Activated T-helper 2 cell treated with anti-CD3 and anti-CD28 coated beads, Interferon-gamma antibody, Interleukin-2, Interleukin-4, amounts not matched to agents 10 μg/mL and 5 μg/mL and 100 μg/mL, durations not matched to agents 14 hours and 24 hours and 36 hours (primary cell): ENCODE measurements at regions of chr5 and their contacts with region 1.

Region 1: GRCh38 chr5:157858527-157859226 is at the start of gene CLINT1:
- DNase-seq: peak; percentile 83
- H3K4me3 Mint-ChIP-seq: peak within 1 kb of the TSS; percentile 86
- H3K27ac Mint-ChIP-seq: peak within 1 kb of the TSS; percentile 98
- H3K4me1 Mint-ChIP-seq: peaks cover 61% of the 10 kb centered on the region
- H3K27me3 Mint-ChIP-seq: no peaks in the 10 kb centered on the region
- total RNA-seq, gene CLINT1: 95.2 and 100 TPM in 2 replicates

Region 2: GRCh38 chr5:157596487-157596886 is 262.2 kb before region 1 on chr5:
- intact Hi-C with region 1: loop called (anchors 5 kb)
- DNase-seq: peak; percentile 49
- H3K4me3 Mint-ChIP-seq: no peak overlapping the region
- H3K27ac Mint-ChIP-seq: peak overlapping the region; percentile 21
- H3K4me1 Mint-ChIP-seq: peaks cover 90% of the 10 kb centered on the region
- H3K27me3 Mint-ChIP-seq: no peaks in the 10 kb centered on the region

Region 3: DNA sequence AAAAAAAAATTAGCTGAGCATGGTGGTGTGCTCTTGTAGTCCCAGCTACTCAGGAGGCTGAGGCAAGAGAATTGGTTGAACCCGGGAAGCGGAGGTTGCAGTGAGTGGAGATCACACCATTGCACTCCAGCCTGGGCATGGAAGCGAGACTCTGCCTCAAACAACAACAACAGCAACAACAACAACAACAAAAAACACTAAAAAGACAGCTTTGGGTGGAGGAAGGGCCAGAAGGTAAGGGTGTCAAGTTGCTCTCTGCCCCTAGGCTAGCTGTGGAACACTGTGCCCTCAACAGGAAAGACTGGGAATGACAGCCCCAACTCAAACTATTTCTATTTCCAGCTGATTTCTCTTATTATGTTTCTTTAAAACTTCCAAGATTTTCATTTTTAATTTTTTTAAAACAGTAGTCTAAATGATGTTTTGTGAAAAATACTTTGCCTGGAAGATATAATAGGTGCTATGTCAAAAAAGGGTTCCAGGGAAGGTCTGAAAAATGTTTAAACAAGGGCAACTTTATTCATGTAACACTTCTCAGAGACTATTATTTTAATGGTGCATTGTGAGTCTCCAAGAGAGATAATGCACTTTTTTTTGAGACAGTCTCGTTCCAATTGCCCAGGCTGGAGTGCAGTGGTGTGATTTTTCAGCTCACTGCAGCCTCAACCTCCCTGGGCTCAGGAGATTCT is 29.6 kb before region 1 on chr5:
- intact Hi-C with region 1: loop called (anchors 2 kb)
- DNase-seq: no peak
- H3K4me3 Mint-ChIP-seq: no peak overlapping the region
- H3K27ac Mint-ChIP-seq: no peak overlapping the region
- H3K4me1 Mint-ChIP-seq: peaks cover 24% of the 10 kb centered on the region
- H3K27me3 Mint-ChIP-seq: no peaks in the 10 kb centered on the region

Region 4: GRCh38 chr5:157892974-157893373 is 34.3 kb after region 1 on chr5:
- intact Hi-C with region 1: loop called (anchors 1 kb)
- DNase-seq: no peak
- H3K4me3 Mint-ChIP-seq: no peak overlapping the region
- H3K27ac Mint-ChIP-seq: no peak overlapping the region
- H3K4me1 Mint-ChIP-seq: peaks cover 17% of the 10 kb centered on the region
- H3K27me3 Mint-ChIP-seq: no peaks in the 10 kb centered on the region

Region 5: DNA sequence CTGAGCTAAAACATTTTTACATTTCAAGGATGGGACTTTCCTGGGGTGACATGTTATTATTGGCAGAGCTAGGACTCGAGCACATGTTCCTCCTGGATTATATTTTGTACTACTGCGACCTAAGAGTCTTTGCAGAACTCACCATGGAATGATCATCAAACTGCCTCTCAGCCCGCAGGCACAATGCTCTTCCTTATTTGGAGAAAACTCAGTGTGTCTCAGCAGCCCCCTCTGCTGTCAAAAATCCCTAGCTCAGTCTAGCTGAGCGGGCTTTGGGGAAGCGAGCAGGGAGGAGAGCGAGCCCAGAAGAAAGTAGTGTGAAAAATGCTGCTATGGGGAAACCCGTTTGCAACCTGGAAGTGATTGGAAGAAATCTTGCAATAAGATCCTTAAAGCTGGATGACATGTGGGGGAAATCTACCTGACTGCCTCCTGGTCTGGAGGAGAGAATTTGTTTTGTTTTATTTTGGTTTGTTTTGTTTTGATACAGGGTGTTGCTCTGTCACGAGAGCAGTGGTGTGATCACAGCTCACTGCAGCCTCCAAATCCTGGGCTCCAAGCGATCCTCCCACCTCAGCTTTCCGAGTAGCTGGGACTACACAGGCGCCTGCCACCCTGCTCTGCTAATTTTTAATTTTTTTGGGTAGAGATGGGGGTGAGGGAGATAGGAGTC is 90.2 kb after region 1 on chr5:
- intact Hi-C with region 1: loop called (anchors 2 kb)
- DNase-seq: peak; percentile 68
- H3K4me3 Mint-ChIP-seq: no peak overlapping the region
- H3K27ac Mint-ChIP-seq: no peak overlapping the region
- H3K4me1 Mint-ChIP-seq: peaks cover 3% of the 10 kb centered on the region
- H3K27me3 Mint-ChIP-seq: peaks cover 15% of the 10 kb centered on the region